Activated CD4-positive, alpha-beta memory T cell treated with anti-CD3 and anti-CD28 coated beads for 36 hours (primary cell): ENCODE measurements at regions of chr4 and their contacts with region 1.

Region 1: DNA sequence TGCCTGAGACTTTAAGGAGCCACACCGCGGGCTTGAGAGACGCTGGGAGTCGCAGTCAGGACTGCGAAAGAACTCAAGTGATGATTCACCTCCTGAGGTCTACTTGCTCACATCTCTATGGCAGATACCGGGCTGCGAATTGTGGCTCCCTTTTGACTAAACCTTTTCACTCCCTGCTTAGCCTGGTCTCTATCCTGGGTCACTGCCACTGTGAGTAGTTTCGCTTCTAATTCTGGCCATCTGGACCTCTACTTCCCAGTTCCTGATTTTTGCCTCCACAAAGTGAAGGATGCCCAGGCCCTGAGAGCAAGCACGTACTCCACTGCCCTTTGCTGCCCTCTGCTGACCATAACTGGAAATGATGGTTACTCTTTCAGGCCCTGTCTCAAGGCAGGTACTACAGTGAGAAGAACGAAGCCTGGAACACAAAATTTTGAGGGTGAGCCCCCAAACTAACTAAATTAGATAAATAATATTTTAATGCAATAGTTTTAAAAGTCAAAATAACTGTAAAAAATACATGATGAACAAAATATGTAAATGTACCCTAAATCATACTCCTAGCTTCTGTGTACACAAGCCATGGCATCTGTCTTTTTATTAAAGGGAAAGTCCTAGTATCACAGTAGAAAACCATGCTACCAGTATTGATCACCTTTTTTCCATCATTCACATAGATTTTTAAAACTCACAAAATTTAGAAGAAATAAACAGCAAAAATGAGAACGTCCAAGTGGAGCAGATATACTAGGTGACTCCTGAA is 16.7 kb downstream of the MAD2L1 start:
- DNase-seq: peak; percentile 74
- H3K4me3 Mint-ChIP-seq: no peak overlapping the region
- H3K27ac Mint-ChIP-seq: no peak overlapping the region
- H3K4me1 Mint-ChIP-seq: peaks cover 2% of the 10 kb centered on the region
- H3K27me3 Mint-ChIP-seq: no peaks in the 10 kb centered on the region

Region 2: DNA sequence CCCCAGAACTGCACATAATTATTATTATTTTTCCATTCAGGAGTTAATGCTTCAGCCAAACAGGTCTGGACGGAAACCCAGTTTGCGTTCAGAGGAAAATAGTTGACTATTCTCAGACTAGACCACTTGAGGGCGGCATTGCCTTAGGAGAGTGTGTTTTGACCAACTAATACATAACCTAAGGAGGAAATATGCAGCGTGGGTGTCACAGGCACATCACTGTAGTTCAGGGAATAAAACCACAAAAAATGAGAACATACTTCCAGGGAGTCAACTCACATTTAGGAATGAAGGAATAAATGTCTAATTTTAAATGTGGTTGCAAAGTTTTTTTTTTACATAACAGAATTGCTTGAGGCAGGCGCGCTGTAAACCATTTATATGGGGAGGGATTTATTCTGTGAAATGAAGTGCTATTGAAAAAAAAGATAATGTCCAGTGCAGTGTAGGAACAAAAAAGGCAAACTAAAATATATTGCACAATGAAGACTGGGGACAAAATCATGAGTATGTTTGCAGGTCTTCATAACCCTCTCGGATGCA is 1068.0 kb before region 1 on chr4:
- CTCF ChIA-PET with region 1: interaction called, 4 read pairs
- POLR2A ChIA-PET with region 1: no interaction called
- intact Hi-C with region 1: loop called (anchors 1 kb)
- DNase-seq: peak; percentile 55
- H3K4me3 Mint-ChIP-seq: no peak overlapping the region
- H3K27ac Mint-ChIP-seq: no peak overlapping the region
- H3K4me1 Mint-ChIP-seq: peaks cover 1% of the 10 kb centered on the region
- H3K27me3 Mint-ChIP-seq: peaks cover 2% of the 10 kb centered on the region

Region 3: GRCh38 chr4:119314356-119314755 is 735.6 kb before region 1 on chr4:
- CTCF ChIA-PET with region 1: no interaction called
- POLR2A ChIA-PET with region 1: no interaction called
- intact Hi-C with region 1: loop called (anchors 5 kb)
- DNase-seq: no peak
- H3K4me3 Mint-ChIP-seq: no peak overlapping the region
- H3K27ac Mint-ChIP-seq: no peak overlapping the region
- H3K4me1 Mint-ChIP-seq: no peaks in the 10 kb centered on the region
- H3K27me3 Mint-ChIP-seq: peaks cover 6% of the 10 kb centered on the region

Region 4: DNA sequence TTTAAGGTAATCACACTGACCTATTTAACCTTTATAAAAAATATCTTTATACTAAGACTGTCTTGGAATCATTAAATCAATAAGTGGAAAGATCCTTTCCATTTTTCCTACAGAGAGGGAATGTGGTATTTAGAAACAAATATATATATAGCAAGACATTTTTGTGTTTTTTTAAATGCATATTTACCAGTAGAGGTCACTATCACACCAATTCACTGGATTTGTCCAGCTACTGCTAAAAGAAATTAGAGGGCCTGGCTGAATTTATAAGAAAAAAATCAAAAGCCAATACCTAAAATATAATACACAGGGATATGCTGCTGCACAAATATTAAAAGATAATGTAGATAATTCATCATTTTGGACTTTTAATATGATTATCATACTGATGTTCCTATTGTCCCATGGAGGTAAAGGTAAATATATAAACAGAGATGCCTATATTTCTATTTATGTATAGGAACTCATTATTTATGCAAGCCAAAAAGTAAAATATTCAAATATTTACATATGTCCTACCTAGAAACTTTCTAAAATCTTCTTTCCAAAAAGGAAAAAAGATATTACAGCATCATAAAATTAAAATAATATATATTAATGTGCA is 490.8 kb before region 1 on chr4:
- CTCF ChIA-PET with region 1: interaction called, 4 read pairs
- POLR2A ChIA-PET with region 1: no interaction called
- intact Hi-C with region 1: loop called (anchors 1 kb)
- DNase-seq: no peak
- H3K4me3 Mint-ChIP-seq: no peak overlapping the region
- H3K27ac Mint-ChIP-seq: no peak overlapping the region
- H3K4me1 Mint-ChIP-seq: no peaks in the 10 kb centered on the region
- H3K27me3 Mint-ChIP-seq: no peaks in the 10 kb centered on the region

Region 5: DNA sequence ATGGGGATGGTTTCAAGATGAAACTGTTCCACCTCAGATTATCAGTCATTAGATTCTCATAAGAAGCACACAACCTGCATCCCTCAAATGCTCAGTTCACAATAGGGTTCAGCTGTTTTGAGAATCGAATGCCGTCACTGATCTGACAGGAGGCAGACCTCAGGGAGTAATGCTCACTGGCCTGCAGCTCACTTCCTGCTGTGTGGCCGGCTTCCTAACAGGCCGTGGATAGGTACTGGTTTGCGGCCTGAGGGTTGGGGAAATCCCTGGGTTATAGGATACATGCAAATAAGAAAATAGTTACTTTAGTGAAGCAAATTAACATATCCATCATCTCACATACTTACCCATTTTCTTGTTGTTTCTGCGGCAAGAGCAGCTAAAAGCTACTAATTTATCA is 143.6 kb before region 1 on chr4:
- CTCF ChIA-PET with region 1: no interaction called
- POLR2A ChIA-PET with region 1: no interaction called
- intact Hi-C with region 1: no loop called
- DNase-seq: no peak
- H3K4me3 Mint-ChIP-seq: no peak overlapping the region
- H3K27ac Mint-ChIP-seq: no peak overlapping the region
- H3K4me1 Mint-ChIP-seq: no peaks in the 10 kb centered on the region
- H3K27me3 Mint-ChIP-seq: no peaks in the 10 kb centered on the region

Region 6: GRCh38 chr4:120000591-120001296 is 49.2 kb before region 1 on chr4:
- CTCF ChIA-PET with region 1: no interaction called
- POLR2A ChIA-PET with region 1: no interaction called
- intact Hi-C with region 1: no loop called
- DNase-seq: no peak
- H3K4me3 Mint-ChIP-seq: no peak overlapping the region
- H3K27ac Mint-ChIP-seq: no peak overlapping the region
- H3K4me1 Mint-ChIP-seq: no peaks in the 10 kb centered on the region
- H3K27me3 Mint-ChIP-seq: peaks cover 12% of the 10 kb centered on the region